Activated CD4-positive, alpha-beta memory T cell treated with anti-CD3 and anti-CD28 coated beads for 36 hours (primary cell): ENCODE measurements at regions of chr2 and their contacts with region 1.

Region 1: GRCh38 chr2:151828143-151828889 is at the start of gene ARL5A:
- DNase-seq: peak; percentile 96
- H3K4me3 Mint-ChIP-seq: peak within 1 kb of the TSS; percentile 93
- H3K27ac Mint-ChIP-seq: peak within 1 kb of the TSS; percentile 79
- H3K4me1 Mint-ChIP-seq: peaks cover 43% of the 10 kb centered on the region
- H3K27me3 Mint-ChIP-seq: no peaks in the 10 kb centered on the region
- total RNA-seq, gene ARL5A: 54.6 to 63.2 TPM

Region 2: DNA sequence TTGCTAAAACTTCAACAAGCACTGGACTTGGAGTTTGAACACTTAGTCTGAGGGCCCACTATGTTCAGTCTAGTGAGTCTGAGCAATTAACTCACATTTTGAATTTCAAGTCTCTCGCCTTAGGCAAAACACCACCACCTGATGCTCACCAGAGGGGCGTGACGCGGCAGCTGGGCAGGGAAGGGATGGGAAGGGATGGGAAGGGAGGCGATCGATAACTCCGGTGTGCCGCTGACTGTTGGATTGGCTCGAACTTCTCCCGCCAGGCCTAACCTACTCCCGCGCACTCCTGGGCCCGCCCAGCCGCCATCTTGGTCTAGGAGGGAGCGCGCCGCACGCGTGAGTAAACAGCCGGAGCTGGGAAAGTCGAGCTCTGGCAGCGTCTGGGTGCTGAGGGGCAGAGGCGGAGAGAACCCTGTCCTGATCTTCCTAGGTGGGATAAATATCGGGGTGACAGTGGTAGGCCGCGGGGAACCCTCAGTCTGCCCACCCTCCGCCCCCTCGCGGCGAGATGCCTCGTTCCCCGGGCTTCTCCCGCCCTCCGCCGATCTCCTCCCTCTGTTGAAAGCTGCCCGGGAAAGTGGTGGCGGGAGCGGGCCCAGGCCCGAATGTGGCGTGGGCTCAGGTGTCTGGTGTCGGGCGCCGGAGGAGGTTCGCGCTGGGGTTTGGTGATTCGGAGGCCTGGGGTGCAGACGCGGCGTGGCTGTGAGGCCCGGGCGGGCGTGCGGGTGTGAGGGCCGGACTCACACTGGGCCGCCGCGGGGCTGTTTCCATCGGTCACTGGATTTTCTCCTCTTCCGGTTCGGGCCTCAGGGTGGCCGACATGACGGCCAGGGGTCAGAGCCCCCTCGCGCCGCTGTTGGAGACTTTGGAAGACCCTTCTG is 418.5 kb before region 1 on chr2 and contains the start of gene RIF1:
- CTCF ChIA-PET with region 1: no interaction called
- POLR2A ChIA-PET with region 1: no interaction called
- intact Hi-C with region 1: loop called (anchors 10 kb)
- DNase-seq: peak; percentile 89
- H3K4me3 Mint-ChIP-seq: peak within 1 kb of the TSS; percentile 90
- H3K27ac Mint-ChIP-seq: peak within 1 kb of the TSS; percentile 83
- H3K4me1 Mint-ChIP-seq: peaks cover 24% of the 10 kb centered on the region
- H3K27me3 Mint-ChIP-seq: no peaks in the 10 kb centered on the region
- total RNA-seq, gene RIF1: 56.8 to 59.2 TPM

Region 3: DNA sequence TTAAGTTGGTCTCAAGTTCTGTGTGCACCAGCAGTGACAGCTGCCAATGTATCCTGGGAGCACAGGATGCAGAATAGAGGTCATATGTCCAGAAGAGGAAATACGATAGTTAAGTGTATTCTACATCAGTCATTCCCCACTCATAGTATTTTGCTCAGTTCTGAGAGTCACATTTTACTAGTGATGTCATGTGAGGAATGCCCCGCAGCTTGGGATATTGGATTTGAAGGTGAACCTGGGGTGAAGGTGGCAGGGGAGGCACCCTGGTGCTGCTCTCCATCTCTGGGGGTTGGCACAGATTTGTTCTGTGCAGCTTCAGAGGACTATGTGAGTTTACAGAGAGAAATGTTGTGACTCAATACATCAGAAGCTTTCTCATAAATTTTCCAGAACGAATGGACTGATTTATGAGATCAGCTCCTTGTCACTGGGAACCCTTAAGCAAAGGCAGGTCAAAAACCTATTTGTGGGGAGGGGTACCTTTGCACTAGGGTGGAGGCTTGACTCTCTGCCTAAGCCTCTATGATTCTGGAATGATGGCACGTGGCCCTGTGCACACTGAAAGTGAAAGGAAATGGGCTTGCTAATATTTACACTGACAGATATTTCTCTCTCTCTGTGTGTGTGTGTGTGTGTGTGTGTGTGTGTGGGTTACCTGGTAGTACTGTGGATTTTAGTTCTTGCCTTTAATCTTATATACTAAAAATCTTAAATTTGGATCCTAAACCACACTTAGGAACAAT is 190.0 kb before region 1 on chr2:
- CTCF ChIA-PET with region 1: no interaction called
- POLR2A ChIA-PET with region 1: no interaction called
- intact Hi-C with region 1: loop called (anchors 10 kb)
- DNase-seq: peak; percentile 41
- H3K4me3 Mint-ChIP-seq: peak overlapping the region; percentile 13
- H3K27ac Mint-ChIP-seq: peak overlapping the region; percentile 79
- H3K4me1 Mint-ChIP-seq: peaks cover 32% of the 10 kb centered on the region
- H3K27me3 Mint-ChIP-seq: no peaks in the 10 kb centered on the region

Region 4: DNA sequence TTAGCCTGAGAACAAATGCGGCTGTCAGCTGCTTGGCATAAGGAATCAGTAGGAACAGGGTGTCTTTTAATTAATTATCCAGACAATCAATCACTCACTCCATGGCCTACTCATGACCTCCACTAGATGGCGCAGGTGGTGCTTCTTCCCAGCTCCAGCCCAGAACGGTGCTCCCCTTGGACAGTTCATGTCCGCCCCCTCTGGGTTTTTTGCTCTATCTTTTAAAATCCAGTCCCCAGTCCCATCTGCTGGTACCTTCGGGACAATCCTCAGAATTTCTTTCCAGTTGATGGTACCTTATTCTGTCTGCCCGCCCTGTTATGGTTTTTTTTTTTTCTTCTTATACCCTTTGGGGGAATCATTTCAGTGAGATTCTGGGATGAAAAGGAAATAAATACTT is 170.7 kb after region 1 on chr2:
- CTCF ChIA-PET with region 1: no interaction called
- POLR2A ChIA-PET with region 1: interaction called, 3 read pairs
- intact Hi-C with region 1: loop called (anchors 5 kb)
- DNase-seq: peak; percentile 57
- H3K4me3 Mint-ChIP-seq: no peak overlapping the region
- H3K27ac Mint-ChIP-seq: no peak overlapping the region
- H3K4me1 Mint-ChIP-seq: peaks cover under 1% of the 10 kb centered on the region
- H3K27me3 Mint-ChIP-seq: peaks cover 2% of the 10 kb centered on the region

Region 5: DNA sequence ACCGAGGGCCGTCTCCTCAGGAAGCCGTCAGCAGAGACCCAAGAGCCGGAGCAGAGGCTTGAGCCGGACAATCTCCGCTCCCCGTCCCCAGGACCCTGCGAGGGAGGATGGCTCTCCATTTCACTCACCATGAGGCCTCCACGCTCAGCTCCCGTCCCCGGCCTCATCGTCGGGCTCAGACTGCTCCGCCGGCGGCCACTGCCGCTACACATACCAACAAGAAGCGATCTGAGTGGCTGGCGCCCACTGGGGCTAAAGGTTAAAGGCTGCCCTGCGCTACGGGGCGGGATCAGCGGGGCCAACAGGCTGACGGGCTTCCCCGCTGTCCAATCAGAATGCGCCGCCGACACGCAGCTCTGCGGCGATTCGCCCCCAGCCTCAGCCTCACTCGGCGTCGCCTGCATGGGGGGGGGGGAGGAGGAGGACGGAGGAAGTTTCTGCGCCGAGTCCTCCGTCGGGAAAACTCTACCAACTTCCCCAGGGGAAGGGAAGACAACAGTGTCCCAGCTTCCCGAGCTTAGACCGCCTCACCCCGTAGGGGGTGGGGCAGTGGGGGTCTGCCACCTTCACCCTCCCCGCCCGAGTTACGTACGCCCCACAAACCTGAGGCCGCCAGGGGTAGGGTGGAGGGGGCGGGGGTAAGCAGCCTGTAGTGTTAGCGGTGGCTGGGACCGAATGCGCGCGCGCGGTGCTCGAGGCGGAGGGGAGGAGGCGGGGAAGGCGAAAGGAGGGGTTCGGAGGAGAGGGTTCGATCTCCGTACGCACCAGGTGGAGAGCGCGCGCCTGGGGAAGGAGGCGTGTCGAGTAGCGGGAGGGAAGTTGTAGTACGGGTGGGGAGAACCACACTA is 889.1 kb after region 1 on chr2 and contains the start of gene PRPF40A:
- CTCF ChIA-PET with region 1: no interaction called
- POLR2A ChIA-PET with region 1: interaction called, 4 read pairs
- intact Hi-C with region 1: loop called (anchors 1 kb)
- DNase-seq: peak; percentile 99
- H3K4me3 Mint-ChIP-seq: peak within 1 kb of the TSS; percentile 100
- H3K27ac Mint-ChIP-seq: peak within 1 kb of the TSS; percentile 100
- H3K4me1 Mint-ChIP-seq: peaks cover 61% of the 10 kb centered on the region
- H3K27me3 Mint-ChIP-seq: no peaks in the 10 kb centered on the region
- total RNA-seq, gene PRPF40A: 128 to 138 TPM